ENCODE measurements at regions of chr4 and their contacts with region 1.

Region 1: GRCh38 chr4:3388471-3389232 is 53.1 kb upstream of the HGFAC start:
- DNase-seq: no peak
- ATAC-seq: peak; percentile 72
- H3K4me3 Mint-ChIP-seq: peak overlapping the region; percentile 83
- H3K27ac Mint-ChIP-seq: peak overlapping the region; percentile 95
- H3K4me1 Mint-ChIP-seq: peaks cover 51% of the 10 kb centered on the region
- H3K27me3 Mint-ChIP-seq: peaks cover 5% of the 10 kb centered on the region
- CTCF ChIP-seq: no peak

Region 2: DNA sequence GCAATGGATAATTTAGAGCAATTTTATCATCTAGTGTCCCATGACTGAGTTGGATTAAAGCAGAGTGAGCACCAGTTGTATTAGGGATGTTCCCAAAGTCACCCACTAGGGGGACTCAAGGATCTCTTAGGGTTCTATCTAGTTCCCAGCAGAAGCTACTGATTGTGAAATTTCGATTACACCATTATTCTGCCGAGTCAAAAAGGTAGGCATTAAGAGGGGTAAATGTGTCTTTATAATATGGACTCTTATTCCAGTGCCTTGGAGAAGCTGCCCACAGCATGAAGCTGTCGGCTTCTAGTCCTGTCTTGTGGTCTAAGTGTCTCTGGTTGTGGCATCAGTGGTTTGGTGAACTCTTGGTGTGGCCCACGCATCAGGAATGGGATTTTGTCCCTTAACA is 42.5 kb before region 1 on chr4:
- CTCF ChIA-PET with region 1: interaction called, 10 read pairs
- POLR2A ChIA-PET with region 1: interaction called, 10 read pairs
- intact Hi-C with region 1: loop called (anchors 1 kb)
- DNase-seq: no peak
- ATAC-seq: peak; percentile 99
- H3K4me3 Mint-ChIP-seq: no peak overlapping the region
- H3K27ac Mint-ChIP-seq: no peak overlapping the region
- H3K4me1 Mint-ChIP-seq: peaks cover 4% of the 10 kb centered on the region
- H3K27me3 Mint-ChIP-seq: no peaks in the 10 kb centered on the region
- CTCF ChIP-seq: peak; percentile 18

Region 3: DNA sequence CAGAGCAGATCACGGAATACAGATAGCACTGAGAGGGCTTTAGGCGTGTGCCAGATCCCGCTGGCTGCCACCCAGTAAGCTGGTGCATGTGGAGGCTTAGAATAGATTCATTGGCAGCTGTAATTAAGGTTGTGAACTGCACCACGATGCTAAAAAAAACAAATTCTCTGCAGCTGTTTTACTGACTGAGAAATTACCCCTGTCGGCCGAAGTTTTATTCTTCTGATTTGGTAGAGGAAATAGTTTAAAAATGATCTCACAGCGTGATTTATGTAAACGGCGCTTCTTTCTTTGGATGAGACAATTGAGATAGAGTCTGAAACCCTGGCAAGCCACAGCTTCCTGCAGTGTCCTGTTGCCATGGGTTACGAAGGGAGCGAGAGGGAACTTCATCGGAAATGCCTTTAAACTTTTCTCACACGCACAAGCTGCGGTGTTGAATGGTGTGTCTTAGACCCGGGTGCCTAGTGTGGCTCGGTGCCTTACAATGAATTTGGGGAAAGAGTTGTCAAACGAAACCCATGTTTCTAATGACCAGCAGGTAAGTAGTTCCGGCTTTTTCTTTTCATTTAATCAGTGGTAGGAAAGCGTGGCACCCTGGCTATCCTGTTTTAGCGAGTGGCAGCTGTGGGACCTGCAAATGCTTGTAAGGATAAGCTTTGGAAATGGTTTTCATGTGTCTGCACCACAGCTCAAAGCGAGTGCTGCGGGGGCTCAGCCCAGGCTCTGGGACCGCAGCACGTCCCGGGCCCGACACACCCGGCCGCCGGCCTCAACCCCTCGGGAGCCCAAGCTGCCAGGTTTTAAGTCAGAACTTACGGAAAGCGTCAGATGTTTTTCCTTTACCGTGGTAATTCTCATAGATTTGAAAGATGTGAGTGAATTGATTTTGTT is 18.6 kb before region 1 on chr4:
- CTCF ChIA-PET with region 1: interaction called, 3 read pairs
- POLR2A ChIA-PET with region 1: interaction called, 25 read pairs
- intact Hi-C with region 1: loop called (anchors 1 kb)
- DNase-seq: no peak
- ATAC-seq: no peak
- H3K4me3 Mint-ChIP-seq: peak overlapping the region; percentile 64
- H3K27ac Mint-ChIP-seq: no peak overlapping the region
- H3K4me1 Mint-ChIP-seq: peaks cover 38% of the 10 kb centered on the region
- H3K27me3 Mint-ChIP-seq: peaks cover 11% of the 10 kb centered on the region
- CTCF ChIP-seq: no peak

Region 4: GRCh38 chr4:3442959-3443749 is 54.5 kb after region 1 on chr4:
- CTCF ChIA-PET with region 1: no interaction called
- POLR2A ChIA-PET with region 1: interaction called, 5 read pairs
- intact Hi-C with region 1: loop called (anchors 1 kb)
- DNase-seq: peak; percentile 82
- ATAC-seq: peak; percentile 94
- H3K4me3 Mint-ChIP-seq: no peak overlapping the region
- H3K27ac Mint-ChIP-seq: no peak overlapping the region
- H3K4me1 Mint-ChIP-seq: no peaks in the 10 kb centered on the region
- H3K27me3 Mint-ChIP-seq: no peaks in the 10 kb centered on the region
- CTCF ChIP-seq: peak; percentile 91

Region 5: DNA sequence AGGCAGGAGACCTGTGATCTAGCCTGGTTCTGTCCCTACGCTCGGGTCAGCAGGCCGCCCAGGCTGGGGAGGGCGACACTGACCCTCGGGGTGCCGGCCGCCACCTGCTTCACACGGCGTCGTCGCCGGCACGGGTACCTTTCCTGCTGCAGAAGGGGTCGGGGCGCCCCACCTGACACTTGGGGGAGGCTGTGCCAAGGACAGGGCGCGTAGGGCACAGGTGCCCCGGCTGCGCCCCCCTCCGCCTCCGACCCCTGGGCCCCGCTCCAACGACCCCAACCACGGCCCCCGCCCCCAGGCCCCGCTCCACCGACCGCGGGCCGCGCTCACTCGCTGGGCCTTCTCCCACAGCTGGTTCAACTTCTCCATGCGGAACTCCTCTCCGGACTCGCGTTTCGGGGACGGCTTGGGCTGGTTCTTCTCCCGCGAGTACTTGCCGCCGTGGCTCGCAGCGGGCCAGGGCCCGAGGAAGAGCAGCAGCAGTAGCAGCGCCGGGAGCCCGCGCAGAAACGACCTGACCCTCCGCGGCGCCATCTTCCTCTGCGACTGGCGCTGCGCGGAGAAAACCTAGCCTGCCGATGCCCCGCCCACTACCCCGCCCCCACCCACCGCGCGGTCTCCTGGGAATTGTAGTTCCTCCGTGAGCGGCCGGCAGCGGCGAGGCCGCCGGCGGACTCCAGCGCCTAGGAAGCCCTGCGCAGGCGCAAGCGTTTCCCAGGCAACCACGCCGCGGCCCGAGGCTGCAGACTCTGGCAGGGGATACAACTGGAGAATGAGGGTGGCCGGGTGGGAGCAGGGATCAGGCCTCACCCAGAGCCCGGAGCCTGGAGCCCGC is 143.4 kb after region 1 on chr4 and contains the start of gene LRPAP1:
- CTCF ChIA-PET with region 1: no interaction called
- POLR2A ChIA-PET with region 1: no interaction called
- intact Hi-C with region 1: loop called (anchors 2 kb)
- DNase-seq: peak; percentile 91
- ATAC-seq: peak; percentile 89
- H3K4me3 Mint-ChIP-seq: peak within 1 kb of the TSS; percentile 99
- H3K27ac Mint-ChIP-seq: peak within 1 kb of the TSS; percentile 94
- H3K4me1 Mint-ChIP-seq: peaks cover 42% of the 10 kb centered on the region
- H3K27me3 Mint-ChIP-seq: no peaks in the 10 kb centered on the region
- CTCF ChIP-seq: no peak
- total RNA-seq, gene LRPAP1: 60.9 and 62.9 TPM in 2 replicates

Region 6: GRCh38 chr4:3660086-3660927 is 271.7 kb after region 1 on chr4:
- CTCF ChIA-PET with region 1: no interaction called
- POLR2A ChIA-PET with region 1: no interaction called
- intact Hi-C with region 1: no loop called
- DNase-seq: no peak
- ATAC-seq: no peak
- H3K4me3 Mint-ChIP-seq: no peak overlapping the region
- H3K27ac Mint-ChIP-seq: no peak overlapping the region
- H3K4me1 Mint-ChIP-seq: peaks cover 9% of the 10 kb centered on the region
- H3K27me3 Mint-ChIP-seq: peaks cover 15% of the 10 kb centered on the region
- CTCF ChIP-seq: no peak